ENCODE measurements at regions of chr12 and their contacts with region 1.

Region 1: DNA sequence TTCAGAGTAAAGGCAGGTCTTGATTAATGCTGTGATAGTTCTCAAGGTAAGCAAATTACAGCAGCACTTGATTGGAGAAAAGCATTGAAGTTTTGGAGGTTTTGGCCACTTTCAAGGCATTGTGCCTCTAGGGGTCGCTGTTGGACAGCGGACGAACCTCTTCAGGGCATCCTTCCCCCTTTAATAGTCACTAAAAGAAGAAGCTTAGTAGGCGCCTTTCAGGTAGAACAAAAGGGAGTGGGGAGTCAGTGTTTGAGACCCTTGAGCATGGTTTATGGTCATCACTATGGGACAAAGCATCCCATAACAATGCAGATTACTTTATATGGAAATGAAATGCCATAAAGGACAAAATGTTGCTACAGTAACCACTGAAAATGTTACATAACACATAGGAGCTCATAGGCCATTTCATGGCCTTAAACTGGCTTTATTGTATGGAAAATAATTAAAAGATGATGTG is 199.5 kb upstream of the DCN start:
- DNase-seq: peak; percentile 84
- H3K4me3 Mint-ChIP-seq: peak overlapping the region; percentile 78
- H3K27ac Mint-ChIP-seq: peak overlapping the region; percentile 21
- H3K4me1 Mint-ChIP-seq: peaks cover 19% of the 10 kb centered on the region
- H3K27me3 Mint-ChIP-seq: no peaks in the 10 kb centered on the region
- CTCF ChIP-seq: peak; percentile 85

Region 2: GRCh38 chr12:91413581-91414546 is 31.8 kb after region 1 on chr12:
- CTCF ChIA-PET with region 1: interaction called, 3 read pairs
- POLR2A ChIA-PET with region 1: interaction called, 18 read pairs
- intact Hi-C with region 1: no loop called
- DNase-seq: peak; percentile 85
- H3K4me3 Mint-ChIP-seq: no peak overlapping the region
- H3K27ac Mint-ChIP-seq: peak overlapping the region; percentile 66
- H3K4me1 Mint-ChIP-seq: peaks cover 16% of the 10 kb centered on the region
- H3K27me3 Mint-ChIP-seq: no peaks in the 10 kb centered on the region
- CTCF ChIP-seq: no peak

Region 3: GRCh38 chr12:91778938-91779400 is 396.9 kb after region 1 on chr12:
- CTCF ChIA-PET with region 1: interaction called, 10 read pairs
- POLR2A ChIA-PET with region 1: interaction called, 29 read pairs
- intact Hi-C with region 1: loop called (anchors 10 kb)
- DNase-seq: peak; percentile 95
- H3K4me3 Mint-ChIP-seq: peak overlapping the region; percentile 65
- H3K27ac Mint-ChIP-seq: peak overlapping the region; percentile 88
- H3K4me1 Mint-ChIP-seq: peaks cover 39% of the 10 kb centered on the region
- H3K27me3 Mint-ChIP-seq: no peaks in the 10 kb centered on the region
- CTCF ChIP-seq: no peak

Region 4: GRCh38 chr12:92078167-92079053 is 696.3 kb after region 1 on chr12:
- CTCF ChIA-PET with region 1: no interaction called
- POLR2A ChIA-PET with region 1: interaction called, 4 read pairs
- intact Hi-C with region 1: loop called (anchors 2 kb)
- DNase-seq: peak; percentile 96
- H3K4me3 Mint-ChIP-seq: peak overlapping the region; percentile 26
- H3K27ac Mint-ChIP-seq: peak overlapping the region; percentile 95
- H3K4me1 Mint-ChIP-seq: peaks cover 60% of the 10 kb centered on the region
- H3K27me3 Mint-ChIP-seq: no peaks in the 10 kb centered on the region
- CTCF ChIP-seq: no peak

Region 5: GRCh38 chr12:92408072-92408900 is 1026.2 kb after region 1 on chr12:
- CTCF ChIA-PET with region 1: interaction called, 4 read pairs
- POLR2A ChIA-PET with region 1: no interaction called
- intact Hi-C with region 1: loop called (anchors 5 kb)
- DNase-seq: peak; percentile 68
- H3K4me3 Mint-ChIP-seq: no peak overlapping the region
- H3K27ac Mint-ChIP-seq: no peak overlapping the region
- H3K4me1 Mint-ChIP-seq: no peaks in the 10 kb centered on the region
- H3K27me3 Mint-ChIP-seq: no peaks in the 10 kb centered on the region
- CTCF ChIP-seq: peak; percentile 48

Region 6: GRCh38 chr12:92608151-92609091 is 1226.3 kb after region 1 on chr12:
- CTCF ChIA-PET with region 1: interaction called, 10 read pairs
- POLR2A ChIA-PET with region 1: interaction called, 4 read pairs
- intact Hi-C with region 1: loop called (anchors 1 kb)
- DNase-seq: peak; percentile 70
- H3K4me3 Mint-ChIP-seq: no peak overlapping the region
- H3K27ac Mint-ChIP-seq: no peak overlapping the region
- H3K4me1 Mint-ChIP-seq: peaks cover 11% of the 10 kb centered on the region
- H3K27me3 Mint-ChIP-seq: no peaks in the 10 kb centered on the region
- CTCF ChIP-seq: peak; percentile 47